Activated naive CD4-positive, alpha-beta T cell treated with anti-CD3 and anti-CD28 coated beads, Interleukin-2, amount 10 ng/mL, durations not matched to agents 7 days and 5 days (primary cell): ENCODE measurements at regions of chr10 and their contacts with region 1.

Region 1: DNA sequence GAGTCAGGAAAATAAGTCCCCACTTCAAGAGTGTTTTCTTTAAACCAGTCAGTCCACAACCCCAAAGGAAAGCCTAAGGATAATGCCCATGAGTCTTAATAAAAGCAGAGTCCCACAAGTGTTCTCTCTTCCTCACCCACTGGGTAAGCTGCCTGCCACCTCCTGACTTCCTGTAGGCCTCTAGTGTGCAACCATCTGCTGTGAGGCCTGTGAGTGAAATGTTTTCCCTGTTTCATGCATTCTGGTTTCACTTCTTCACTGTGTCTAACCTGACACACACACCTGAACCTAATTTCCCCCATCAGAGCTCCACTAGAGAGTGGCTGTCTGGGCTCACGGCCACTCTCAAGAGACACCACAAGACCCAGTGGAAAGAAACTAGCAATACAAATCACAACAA is 38.9 kb upstream of the GDF10 start:
- DNase-seq: peak; percentile 63
- H3K4me3 Mint-ChIP-seq: peak overlapping the region; percentile 8
- H3K27ac Mint-ChIP-seq: peak overlapping the region; percentile 98
- H3K4me1 Mint-ChIP-seq: peaks cover 92% of the 10 kb centered on the region
- H3K27me3 Mint-ChIP-seq: no peaks in the 10 kb centered on the region

Region 2: GRCh38 chr10:47024399-47025252 is 236.5 kb before region 1 on chr10:
- CTCF ChIA-PET with region 1: no interaction called
- DNase-seq: peak; percentile 81
- H3K4me3 Mint-ChIP-seq: no peak overlapping the region
- H3K27ac Mint-ChIP-seq: no peak overlapping the region
- H3K4me1 Mint-ChIP-seq: no peaks in the 10 kb centered on the region
- H3K27me3 Mint-ChIP-seq: peaks cover 3% of the 10 kb centered on the region

Region 3: GRCh38 chr10:47277352-47278151 is 16.4 kb after region 1 on chr10:
- CTCF ChIA-PET with region 1: interaction called, 14 read pairs
- DNase-seq: peak; percentile 82
- H3K4me3 Mint-ChIP-seq: peak overlapping the region; percentile 16
- H3K27ac Mint-ChIP-seq: peak overlapping the region; percentile 86
- H3K4me1 Mint-ChIP-seq: peaks cover 47% of the 10 kb centered on the region
- H3K27me3 Mint-ChIP-seq: peaks cover 15% of the 10 kb centered on the region

Region 4: GRCh38 chr10:47288916-47289495 is 27.9 kb after region 1 on chr10:
- CTCF ChIA-PET with region 1: no interaction called
- DNase-seq: no peak
- H3K4me3 Mint-ChIP-seq: no peak overlapping the region
- H3K27ac Mint-ChIP-seq: no peak overlapping the region
- H3K4me1 Mint-ChIP-seq: peaks cover 33% of the 10 kb centered on the region
- H3K27me3 Mint-ChIP-seq: peaks cover 24% of the 10 kb centered on the region

Region 5: GRCh38 chr10:47306387-47307210 is 45.5 kb after region 1 on chr10:
- CTCF ChIA-PET with region 1: interaction called, 34 read pairs
- DNase-seq: no peak
- H3K4me3 Mint-ChIP-seq: no peak overlapping the region
- H3K27ac Mint-ChIP-seq: no peak overlapping the region
- H3K4me1 Mint-ChIP-seq: peaks cover 18% of the 10 kb centered on the region
- H3K27me3 Mint-ChIP-seq: peaks cover 32% of the 10 kb centered on the region

Region 6: GRCh38 chr10:47311932-47312662 is 51.0 kb after region 1 on chr10:
- CTCF ChIA-PET with region 1: interaction called, 34 read pairs
- DNase-seq: peak; percentile 91
- H3K4me3 Mint-ChIP-seq: peak overlapping the region; percentile 21
- H3K27ac Mint-ChIP-seq: peak overlapping the region; percentile 87
- H3K4me1 Mint-ChIP-seq: peaks cover 25% of the 10 kb centered on the region
- H3K27me3 Mint-ChIP-seq: peaks cover 15% of the 10 kb centered on the region

Region 7: DNA sequence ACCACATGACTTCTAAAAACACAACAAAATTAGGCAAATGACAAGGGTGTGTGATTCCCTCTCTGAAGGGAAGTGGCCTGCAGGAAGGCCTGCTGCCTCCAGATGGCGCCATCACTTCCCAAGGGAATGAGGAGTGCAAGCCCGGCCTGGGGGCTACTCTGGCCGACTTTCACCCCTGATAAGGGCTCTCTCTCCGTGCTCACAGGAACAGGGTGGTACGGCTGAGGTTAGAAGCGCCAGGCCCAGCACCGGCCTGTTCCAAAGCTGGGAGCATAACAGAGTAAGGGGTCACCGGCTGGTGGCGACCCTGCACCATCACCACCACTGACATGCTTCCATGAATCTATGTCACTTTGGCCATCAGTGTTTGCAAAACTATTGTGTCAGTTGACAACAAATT is 100.2 kb after region 1 on chr10:
- CTCF ChIA-PET with region 1: no interaction called
- DNase-seq: peak; percentile 52
- H3K4me3 Mint-ChIP-seq: no peak overlapping the region
- H3K27ac Mint-ChIP-seq: no peak overlapping the region
- H3K4me1 Mint-ChIP-seq: no peaks in the 10 kb centered on the region
- H3K27me3 Mint-ChIP-seq: peaks cover 3% of the 10 kb centered on the region